ENCODE measurements at regions of chr3 and their contacts with region 1.

Region 1: DNA sequence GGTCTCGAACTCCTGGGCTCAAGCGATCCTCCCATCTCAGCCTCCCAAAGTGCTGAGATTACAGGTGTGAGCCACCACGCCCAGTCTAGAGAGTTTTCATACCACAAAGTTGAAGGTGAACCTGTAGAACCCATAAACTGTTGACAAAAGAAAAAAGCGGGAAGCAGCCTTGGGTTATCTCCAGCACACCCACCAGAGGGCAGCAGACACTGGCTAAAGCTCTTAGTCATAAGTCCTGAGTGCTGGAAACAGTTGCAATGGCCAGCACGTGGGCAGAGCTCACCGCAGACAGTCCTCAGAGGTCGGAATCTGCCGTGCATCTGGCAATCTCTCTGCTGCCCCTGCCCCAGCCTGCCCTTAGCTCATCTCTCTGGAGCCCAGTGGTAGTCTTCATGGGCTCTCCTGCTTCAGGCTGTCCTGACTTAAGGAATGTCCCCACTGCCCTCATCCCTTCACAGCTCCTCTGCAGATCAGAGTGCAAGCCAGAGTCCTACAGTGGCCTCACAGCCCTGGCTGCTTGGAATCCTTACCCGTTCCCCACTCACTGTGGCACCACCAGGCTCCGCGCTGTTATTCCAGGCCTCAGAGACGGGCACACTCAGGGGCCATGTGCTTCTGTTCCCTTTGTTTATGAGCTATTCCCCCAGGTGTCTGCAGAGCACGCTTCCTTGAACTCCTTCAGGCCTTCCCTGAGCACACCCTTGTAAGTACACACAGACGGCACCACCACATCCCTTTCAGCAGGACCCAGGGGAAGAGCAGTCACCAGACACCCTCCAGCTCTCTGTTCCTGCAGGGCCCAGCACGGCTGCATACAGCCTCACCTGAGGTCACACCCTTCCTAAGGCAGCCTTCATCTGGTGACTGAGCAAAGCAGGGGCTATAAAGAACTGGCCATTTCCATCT is 8.8 kb upstream of the ELP6 start:
- DNase-seq: peak; percentile 90
- ATAC-seq: peak; percentile 93
- H3K4me3 Mint-ChIP-seq: no peak overlapping the region
- H3K27ac Mint-ChIP-seq: peak overlapping the region; percentile 32
- H3K4me1 Mint-ChIP-seq: peaks cover 5% of the 10 kb centered on the region
- H3K27me3 Mint-ChIP-seq: no peaks in the 10 kb centered on the region

Region 2: GRCh38 chr3:47210863-47211405 is 311.4 kb before region 1 on chr3:
- CTCF ChIA-PET with region 1: no interaction called
- POLR2A ChIA-PET with region 1: no interaction called
- intact Hi-C with region 1: no loop called
- DNase-seq: no peak
- ATAC-seq: no peak
- H3K4me3 Mint-ChIP-seq: no peak overlapping the region
- H3K27ac Mint-ChIP-seq: no peak overlapping the region
- H3K4me1 Mint-ChIP-seq: no peaks in the 10 kb centered on the region
- H3K27me3 Mint-ChIP-seq: no peaks in the 10 kb centered on the region

Region 3: GRCh38 chr3:47533481-47533880 is 11.1 kb after region 1 on chr3:
- CTCF ChIA-PET with region 1: interaction called, 15 read pairs
- POLR2A ChIA-PET with region 1: no interaction called
- intact Hi-C with region 1: no loop called
- DNase-seq: peak; percentile 30
- ATAC-seq: peak; percentile 51
- H3K4me3 Mint-ChIP-seq: no peak overlapping the region
- H3K27ac Mint-ChIP-seq: no peak overlapping the region
- H3K4me1 Mint-ChIP-seq: no peaks in the 10 kb centered on the region
- H3K27me3 Mint-ChIP-seq: no peaks in the 10 kb centered on the region

Region 4: GRCh38 chr3:47578119-47578632 is 55.8 kb after region 1 on chr3:
- CTCF ChIA-PET with region 1: interaction called, 5 read pairs
- POLR2A ChIA-PET with region 1: no interaction called
- intact Hi-C with region 1: loop called in 1 of 2 experiments (anchors 2 kb)
- DNase-seq: peak; percentile 61
- ATAC-seq: peak; percentile 75
- H3K4me3 Mint-ChIP-seq: peak overlapping the region; percentile 52
- H3K27ac Mint-ChIP-seq: no peak overlapping the region
- H3K4me1 Mint-ChIP-seq: no peaks in the 10 kb centered on the region
- H3K27me3 Mint-ChIP-seq: peaks cover 18% of the 10 kb centered on the region

Region 5: GRCh38 chr3:47791193-47791855 is 269.0 kb after region 1 on chr3:
- CTCF ChIA-PET with region 1: interaction called, 16 read pairs
- POLR2A ChIA-PET with region 1: interaction called, 6 read pairs
- intact Hi-C with region 1: loop called (anchors 1 kb)
- DNase-seq: no peak
- ATAC-seq: no peak
- H3K4me3 Mint-ChIP-seq: no peak overlapping the region
- H3K27ac Mint-ChIP-seq: no peak overlapping the region
- H3K4me1 Mint-ChIP-seq: peaks cover 2% of the 10 kb centered on the region
- H3K27me3 Mint-ChIP-seq: no peaks in the 10 kb centered on the region